ENCODE measurements at regions of chr6 and their contacts with region 1.

Region 1: DNA sequence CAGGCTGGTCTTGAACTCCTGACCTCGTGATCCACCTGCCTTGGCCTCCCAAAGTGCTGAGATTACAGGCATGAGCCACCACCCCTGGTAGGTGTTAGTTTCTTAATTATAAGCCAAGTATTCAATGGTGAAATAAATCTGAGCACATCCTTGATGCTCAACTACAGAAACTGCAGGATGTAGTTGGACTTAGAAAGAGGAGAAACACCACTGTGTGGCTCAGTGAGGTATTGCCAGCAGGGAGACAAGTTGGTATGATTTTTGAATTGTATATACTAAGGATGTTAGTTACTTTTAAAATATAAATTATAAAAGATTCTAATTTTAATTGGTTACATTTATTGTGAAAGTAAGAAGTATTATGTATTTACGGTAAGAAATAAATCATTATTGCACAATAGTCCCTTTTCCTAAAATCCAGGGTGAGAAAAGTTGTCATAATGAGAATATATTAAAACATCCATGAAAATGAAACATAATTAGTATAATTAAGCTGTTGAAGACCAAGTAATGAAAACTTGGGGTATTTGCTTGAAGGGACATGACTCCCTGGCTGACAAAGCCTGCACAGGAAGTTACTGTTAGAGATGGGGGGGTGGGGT is 17.6 kb downstream of the SLC18B1 start:
- DNase-seq: no peak
- H3K4me3 Mint-ChIP-seq: no peak overlapping the region
- H3K27ac Mint-ChIP-seq: no peak overlapping the region
- H3K4me1 Mint-ChIP-seq: no peaks in the 10 kb centered on the region
- H3K27me3 Mint-ChIP-seq: no peaks in the 10 kb centered on the region

Region 2: DNA sequence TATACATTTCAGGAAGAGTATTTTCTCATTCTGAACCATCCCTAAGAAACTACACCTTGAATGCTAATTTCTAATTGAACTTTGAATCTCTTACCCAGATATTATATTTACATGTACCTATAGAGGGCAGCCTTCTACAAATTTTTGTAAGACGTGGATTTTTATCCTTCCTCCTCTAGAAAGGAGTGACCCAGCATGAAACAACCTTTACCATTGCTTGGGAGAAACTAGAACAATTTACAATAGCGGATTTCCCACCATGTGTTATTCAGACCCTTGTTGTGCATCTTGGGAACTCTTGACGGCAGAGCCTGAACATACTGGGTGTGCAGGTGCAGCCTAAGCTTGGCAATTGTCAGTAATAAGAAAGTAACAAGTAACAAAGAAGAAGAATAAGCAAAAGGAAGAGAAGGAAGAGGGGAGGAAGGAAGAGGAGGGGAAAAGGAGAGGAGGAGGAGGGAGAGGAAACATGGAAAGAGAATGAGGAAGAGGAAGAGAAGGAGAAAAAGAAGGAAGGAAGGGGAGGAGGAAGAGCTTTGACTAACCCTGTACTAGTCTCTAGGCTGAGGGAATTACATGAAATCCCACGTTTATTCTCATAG is 111.1 kb before region 1 on chr6:
- intact Hi-C with region 1: loop called (anchors 5 kb)
- DNase-seq: no peak
- H3K4me3 Mint-ChIP-seq: no peak overlapping the region
- H3K27ac Mint-ChIP-seq: no peak overlapping the region
- H3K4me1 Mint-ChIP-seq: peaks cover 7% of the 10 kb centered on the region
- H3K27me3 Mint-ChIP-seq: peaks cover 5% of the 10 kb centered on the region

Measured in activated T-helper 1 cell treated with anti-CD3 and anti-CD28 coated beads, Interleukin-12 subunit alpha, Interleukin-12 subunit beta, Interleukin-2, Interleukin-4 antibody, amounts not matched to agents 30 ng/mL and 10 ng/mL and 1 ng/mL, durations not matched to agents 14 hours and 24 hours and 36 hours (primary cell).